Activated CD8-positive, alpha-beta T cell treated with anti-CD3 and anti-CD28 coated beads for 36 hours (primary cell): ENCODE measurements at regions of chr1 and their contacts with region 1.

Region 1: DNA sequence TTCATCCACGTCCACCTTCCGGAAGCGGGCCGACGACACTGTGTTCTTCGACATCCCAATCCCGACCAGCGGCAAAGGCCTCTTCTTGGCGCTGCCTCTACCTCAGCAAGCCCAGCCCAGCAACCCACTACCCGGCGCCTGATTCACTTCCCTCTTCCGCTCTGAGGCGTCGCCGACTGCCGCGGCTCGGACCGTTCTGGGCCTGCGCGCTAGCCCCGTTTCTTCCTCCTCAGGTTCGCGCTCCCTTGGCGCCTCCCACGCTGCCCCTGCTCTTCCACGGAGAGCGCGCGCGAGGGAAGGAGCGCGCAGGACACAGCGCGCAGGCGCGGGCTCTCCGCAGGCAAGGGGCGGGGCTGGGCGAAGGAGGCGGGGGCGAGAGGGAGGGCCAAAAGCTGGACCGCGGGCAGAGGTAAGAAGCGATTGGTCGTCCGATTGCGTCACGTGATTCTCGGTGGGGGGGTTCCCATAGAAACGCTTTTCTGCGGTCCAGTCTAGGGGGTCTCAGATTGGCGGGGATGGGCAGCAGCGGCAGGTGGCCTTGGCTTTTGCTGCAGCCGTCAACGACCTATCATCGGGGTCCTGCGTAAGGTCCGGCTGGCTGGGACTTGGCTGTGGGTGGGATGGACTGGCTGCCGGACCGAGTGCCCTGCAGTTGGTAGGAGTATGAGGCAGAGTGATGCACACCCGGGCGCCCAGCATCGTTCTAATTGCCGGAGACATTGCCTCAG is at the start of gene ARPC5:
- DNase-seq: peak; percentile 95
- ATAC-seq: peak; percentile 89
- H3K4me3 Mint-ChIP-seq: peak within 1 kb of the TSS; percentile 89
- H3K27ac Mint-ChIP-seq: peak within 1 kb of the TSS; percentile 98
- H3K4me1 Mint-ChIP-seq: peaks cover 38% of the 10 kb centered on the region
- H3K27me3 Mint-ChIP-seq: no peaks in the 10 kb centered on the region
- CTCF ChIP-seq: no peak
- total RNA-seq, gene ARPC5: 128 to 134 TPM

Region 2: DNA sequence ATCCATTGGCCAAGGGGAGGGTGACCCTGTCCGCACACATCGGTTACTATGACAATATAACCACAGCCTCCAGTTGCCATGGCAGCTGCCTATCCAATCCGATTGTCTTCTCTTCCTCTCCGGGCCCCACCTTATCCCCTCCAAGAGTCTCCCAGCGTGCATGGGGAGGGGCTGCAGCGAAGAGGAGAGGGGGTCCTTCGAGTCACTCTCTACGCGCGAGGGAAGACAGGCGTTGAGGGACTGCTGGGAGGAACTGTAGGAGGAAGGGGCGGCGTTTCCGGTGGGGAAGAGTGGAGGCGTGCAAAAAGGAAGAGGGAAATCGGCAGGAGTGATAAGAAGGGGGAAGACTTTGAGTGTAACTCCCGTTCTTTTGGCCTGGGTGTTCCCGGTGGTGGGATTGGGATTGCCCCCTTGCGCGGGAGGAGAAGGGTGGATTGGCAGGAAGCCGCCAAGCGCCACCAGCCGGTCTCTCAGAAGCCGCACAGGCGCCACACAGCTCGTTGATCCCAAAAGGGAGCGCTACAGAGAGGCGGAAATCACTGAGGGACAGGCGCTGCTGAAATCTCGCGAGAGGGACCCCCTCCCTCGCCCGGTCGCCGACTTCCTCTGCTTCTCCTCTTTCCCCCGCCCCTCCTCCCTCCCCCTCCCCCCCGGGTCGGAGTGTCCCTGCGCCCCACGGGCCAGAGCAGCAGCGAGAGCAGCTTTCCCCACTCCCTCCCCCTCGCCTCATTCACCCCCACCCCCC is 163.9 kb before region 1 on chr1:
- CTCF ChIA-PET with region 1: interaction called, 6 read pairs
- POLR2A ChIA-PET with region 1: interaction called, 9 read pairs
- intact Hi-C with region 1: loop called (anchors 5 kb)
- DNase-seq: peak; percentile 98
- ATAC-seq: peak; percentile 70
- H3K4me3 Mint-ChIP-seq: peak overlapping the region; percentile 86
- H3K27ac Mint-ChIP-seq: peak overlapping the region; percentile 100
- H3K4me1 Mint-ChIP-seq: peaks cover 25% of the 10 kb centered on the region
- H3K27me3 Mint-ChIP-seq: no peaks in the 10 kb centered on the region
- CTCF ChIP-seq: no peak

Region 3: GRCh38 chr1:183609313-183609712 is 26.5 kb before region 1 on chr1:
- CTCF ChIA-PET with region 1: no interaction called
- POLR2A ChIA-PET with region 1: no interaction called
- intact Hi-C with region 1: no loop called
- DNase-seq: peak; percentile 30
- ATAC-seq: peak; percentile 58
- H3K4me3 Mint-ChIP-seq: no peak overlapping the region
- H3K27ac Mint-ChIP-seq: no peak overlapping the region
- H3K4me1 Mint-ChIP-seq: peaks cover 6% of the 10 kb centered on the region
- H3K27me3 Mint-ChIP-seq: no peaks in the 10 kb centered on the region
- CTCF ChIP-seq: no peak

Region 4: DNA sequence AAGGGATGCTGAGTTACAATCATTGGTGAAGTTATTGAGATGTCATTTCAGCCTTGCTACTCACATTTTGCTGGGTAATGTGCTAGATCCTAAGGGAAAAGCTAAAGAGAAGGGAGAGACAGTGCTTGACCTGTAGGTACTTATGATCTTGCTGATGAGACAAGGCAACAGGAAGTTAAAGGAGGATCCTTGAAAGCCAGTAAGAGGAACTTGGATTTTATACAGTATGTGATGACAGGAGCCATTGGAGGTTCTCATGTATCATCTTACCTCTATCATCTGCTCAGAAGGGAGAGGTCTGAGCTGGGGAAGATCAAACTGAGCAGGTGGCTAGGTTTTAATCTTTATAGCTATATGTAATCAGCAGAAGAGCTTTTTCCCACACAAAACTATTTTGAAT is 11.0 kb after region 1 on chr1:
- CTCF ChIA-PET with region 1: interaction called, 14 read pairs
- POLR2A ChIA-PET with region 1: interaction called, 4 read pairs
- intact Hi-C with region 1: no loop called
- DNase-seq: no peak
- ATAC-seq: no peak
- H3K4me3 Mint-ChIP-seq: no peak overlapping the region
- H3K27ac Mint-ChIP-seq: no peak overlapping the region
- H3K4me1 Mint-ChIP-seq: peaks cover 6% of the 10 kb centered on the region
- H3K27me3 Mint-ChIP-seq: no peaks in the 10 kb centered on the region
- CTCF ChIP-seq: no peak